GM12878 (cell line): ENCODE measurements at regions of chr19 and their contacts with region 1.

Region 1: DNA sequence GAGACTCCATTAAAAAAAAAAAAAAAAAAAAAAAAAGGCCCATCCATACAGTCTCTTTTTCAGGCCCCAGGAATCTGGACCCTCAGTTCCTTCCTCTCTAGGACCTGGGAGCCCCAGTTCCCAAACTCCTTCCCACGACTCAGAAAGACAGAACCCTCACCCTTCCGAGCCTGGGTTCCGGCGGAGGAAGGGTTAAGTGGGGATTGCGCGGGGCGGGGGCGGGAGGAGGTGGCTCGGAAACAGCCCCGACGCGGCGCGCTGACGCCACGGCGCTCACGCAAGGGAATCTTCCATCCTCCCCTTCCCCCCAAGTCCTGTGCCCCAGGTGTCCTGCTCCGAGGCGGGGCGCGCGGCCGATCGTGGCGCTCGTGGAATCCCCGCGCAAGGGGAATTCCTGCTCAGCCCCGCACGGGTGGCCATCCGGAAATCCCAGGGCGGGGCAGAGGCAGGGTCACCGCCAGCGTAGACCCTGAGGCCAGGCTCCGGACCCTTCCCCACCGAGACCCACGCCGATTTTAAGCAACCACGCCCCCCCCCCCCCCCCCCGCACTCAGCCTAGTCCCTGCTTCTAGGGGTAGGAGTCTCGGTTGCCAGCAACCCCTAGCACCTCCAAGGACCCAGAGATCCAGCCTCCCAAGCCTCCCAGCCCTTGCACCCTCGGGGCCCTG is 659 bp downstream of the NFKBID start:
- DNase-seq: peak; percentile 78
- ATAC-seq: peak; percentile 69
- H3K4me3 ChIP-seq: peak overlapping the region; percentile 96
- H3K27ac ChIP-seq: peak overlapping the region; percentile 96
- H3K4me1 ChIP-seq: peaks cover 37% of the 10 kb centered on the region
- H3K27me3 ChIP-seq: no peaks in the 10 kb centered on the region
- CTCF ChIP-seq: no peak
- EP300 ChIP-seq: peak; percentile 54 to 58; a peak in 2 of 4 replicates
- POLR2A ChIP-seq: peak; percentile 38; the same call in 1 of the 2 replicates
- RAD21 ChIP-seq: no peak

Region 2: DNA sequence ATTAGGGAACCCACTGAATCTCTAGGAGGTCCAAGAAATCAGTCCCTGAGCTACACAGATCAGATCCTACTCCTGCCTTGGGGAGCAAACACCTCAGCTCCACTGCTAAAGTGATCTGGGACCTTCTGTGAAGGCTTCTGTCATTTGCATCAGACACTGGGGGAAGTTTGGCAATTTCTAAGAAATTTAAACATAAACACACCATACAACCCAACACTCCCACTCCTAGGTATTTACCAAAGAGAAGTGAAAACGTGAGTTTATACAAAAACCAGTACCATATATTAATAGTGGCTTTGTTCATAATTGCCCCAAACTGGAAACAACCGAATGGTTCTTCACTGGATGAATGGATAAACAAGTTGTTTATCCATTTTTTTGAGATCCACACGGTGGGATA is 15.8 kb after region 1 on chr19:
- CTCF ChIA-PET with region 1: no interaction called
- POLR2A ChIA-PET with region 1: interaction called, 22 read pairs
- RAD21 ChIA-PET with region 1: interaction called, 4 read pairs
- SMC1A ChIA-PET with region 1: interaction called, 4 read pairs
- in situ Hi-C with region 1: no loop called
- intact Hi-C with region 1: no loop called
- DNase-seq: no peak
- ATAC-seq: peak; percentile 67
- H3K4me3 ChIP-seq: no peak overlapping the region
- H3K27ac ChIP-seq: no peak overlapping the region; the same call in 1 of the 2 replicates
- H3K4me1 ChIP-seq: peaks cover 45% of the 10 kb centered on the region
- H3K27me3 ChIP-seq: no peaks in the 10 kb centered on the region
- CTCF ChIP-seq: no peak
- EP300 ChIP-seq: no peak; a peak in 1 of 4 replicates
- POLR2A ChIP-seq: no peak
- RAD21 ChIP-seq: no peak